ENCODE measurements at regions of chr11 and their contacts with region 1.

Region 1: DNA sequence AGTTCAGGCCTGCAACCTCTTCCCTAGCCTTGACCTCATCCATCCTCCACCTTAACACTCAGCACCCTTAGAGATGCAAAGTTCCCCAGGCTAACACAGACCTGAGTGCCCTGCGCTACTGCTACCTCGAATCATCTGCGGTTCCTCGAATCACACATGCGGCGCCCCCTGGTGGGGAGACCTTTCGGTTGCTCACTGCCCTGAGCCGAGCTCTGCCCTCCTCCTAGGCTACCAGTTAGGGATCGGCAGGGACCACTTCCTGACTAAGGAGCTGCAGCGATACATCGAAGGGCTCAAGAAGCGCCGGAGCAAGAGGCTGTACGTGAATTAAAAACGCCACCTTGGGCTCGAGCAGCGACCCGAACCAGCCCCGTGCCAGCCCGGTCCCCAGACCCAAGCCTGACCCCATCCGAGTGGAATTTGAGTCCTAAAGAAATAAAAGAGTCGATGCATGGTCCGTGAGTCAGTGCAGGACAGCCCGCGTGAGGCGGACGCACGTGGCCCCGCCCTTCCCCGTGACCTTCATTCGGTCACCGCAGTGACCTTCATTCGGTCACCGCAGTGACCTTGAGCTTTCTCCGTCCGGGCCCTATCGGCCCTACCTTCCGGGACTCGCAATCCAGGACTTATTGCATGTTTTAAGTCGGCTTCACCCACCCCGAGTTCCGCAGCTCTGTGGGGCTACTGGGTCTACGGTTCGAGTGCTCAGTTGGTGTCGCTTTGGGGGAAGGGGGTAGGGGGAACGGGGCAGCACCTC is 830 bp upstream of the ESRRA start:
- H3K4me3 Mint-ChIP-seq: peak overlapping the region; percentile 99
- H3K27ac Mint-ChIP-seq: peak overlapping the region; percentile 100
- H3K4me1 Mint-ChIP-seq: peaks cover 54% of the 10 kb centered on the region
- H3K27me3 Mint-ChIP-seq: peaks cover 26% of the 10 kb centered on the region

Region 2: GRCh38 chr11:64204464-64204989 is 100.0 kb before region 1 on chr11:
- intact Hi-C with region 1: loop called (anchors 1 kb)
- H3K4me3 Mint-ChIP-seq: peak overlapping the region; percentile 8
- H3K27ac Mint-ChIP-seq: peak overlapping the region; percentile 91
- H3K4me1 Mint-ChIP-seq: peaks cover 75% of the 10 kb centered on the region
- H3K27me3 Mint-ChIP-seq: no peaks in the 10 kb centered on the region

Region 3: DNA sequence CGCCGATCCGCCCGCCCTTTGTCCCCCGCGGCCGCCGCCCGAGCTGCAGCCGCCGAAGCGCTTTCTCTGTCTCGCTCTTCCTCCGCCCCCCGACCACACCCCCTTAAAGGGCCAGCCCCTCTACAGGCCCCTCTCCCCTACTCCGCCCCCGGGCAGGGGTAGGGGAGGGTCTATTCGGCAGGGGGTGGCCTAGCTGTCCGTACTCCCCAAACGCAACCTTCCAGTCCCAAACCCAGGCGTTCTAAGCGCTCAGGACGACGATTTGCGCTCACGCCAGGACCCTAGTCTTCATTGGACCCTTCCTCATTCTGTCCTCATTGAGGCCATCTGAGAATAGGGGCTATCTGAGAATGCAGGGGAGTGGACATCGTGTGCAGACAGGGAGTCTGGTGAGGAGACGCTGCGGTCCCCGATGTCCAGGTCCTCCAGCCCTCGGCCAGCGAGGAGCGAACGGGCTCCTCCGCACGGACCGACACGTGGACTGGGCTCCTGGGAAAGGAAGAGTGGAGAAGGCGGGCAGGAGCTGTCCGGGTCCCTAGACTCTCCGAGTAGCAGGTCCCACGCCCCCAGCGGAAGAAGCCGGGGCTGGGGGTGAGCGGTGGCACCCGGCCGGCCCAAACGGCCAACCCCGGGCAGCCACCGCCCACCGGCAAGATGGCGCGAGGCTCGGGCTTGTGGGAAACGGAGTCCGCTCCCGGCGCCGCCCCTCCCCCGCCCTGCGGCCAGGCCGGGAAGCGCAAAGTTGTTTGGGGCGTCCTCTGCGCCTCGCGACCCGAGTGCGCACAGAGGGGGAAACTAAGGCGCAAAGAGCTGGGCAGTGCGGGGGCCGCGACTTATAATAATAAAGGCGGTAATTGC is 57.4 kb before region 1 on chr11 and contains the start of gene PPP1R14B:
- intact Hi-C with region 1: loop called (anchors 5 kb)
- H3K4me3 Mint-ChIP-seq: peak within 1 kb of the TSS; percentile 89
- H3K27ac Mint-ChIP-seq: peak within 1 kb of the TSS; percentile 92
- H3K4me1 Mint-ChIP-seq: peaks cover 77% of the 10 kb centered on the region
- H3K27me3 Mint-ChIP-seq: peaks cover 9% of the 10 kb centered on the region

Region 4: DNA sequence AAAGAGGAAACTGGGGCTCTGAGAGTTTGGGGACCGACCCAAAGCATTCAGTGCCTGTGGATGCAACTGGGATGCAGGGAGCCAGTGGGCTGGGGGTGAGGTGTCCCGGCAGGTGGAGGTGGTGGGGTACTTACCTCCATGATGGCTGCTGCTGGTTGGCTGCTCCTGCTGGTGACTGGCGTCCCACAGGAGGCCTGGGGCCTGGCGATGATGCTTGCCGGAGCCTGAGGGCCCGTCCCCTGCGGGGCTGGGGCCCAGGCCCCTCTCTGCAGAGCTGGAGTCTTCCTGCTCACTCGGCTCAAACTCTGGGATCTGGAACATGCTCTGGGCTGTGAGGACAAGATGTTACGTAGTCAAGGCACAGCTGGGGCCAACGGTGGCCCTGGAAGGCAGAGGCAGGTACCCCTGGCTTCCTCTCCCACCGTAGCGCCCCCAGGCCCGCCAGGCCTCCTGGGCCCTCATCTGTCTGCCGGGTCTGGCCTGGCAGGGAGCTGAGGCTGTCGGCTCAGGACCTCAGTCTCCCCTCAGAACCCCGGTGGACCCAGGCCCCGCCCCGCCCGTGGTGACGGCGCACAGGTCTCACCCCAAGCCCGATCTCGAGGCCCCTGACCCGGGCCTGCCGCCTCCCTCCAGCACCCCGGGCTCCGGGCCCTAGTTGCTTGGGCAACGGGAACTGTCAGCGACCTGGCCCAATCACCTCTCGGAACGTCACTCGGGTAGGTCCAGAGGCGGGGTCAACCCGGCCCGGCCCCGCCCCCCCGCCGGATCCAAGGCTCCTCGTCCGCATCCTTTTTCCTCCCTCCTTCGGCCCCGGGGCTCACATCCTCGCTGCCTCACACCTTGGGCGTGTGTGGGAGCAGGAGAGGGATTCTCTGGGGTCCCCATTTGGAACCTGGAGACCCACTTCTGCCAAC is 20.2 kb before region 1 on chr11 and contains the start of gene BAD:
- intact Hi-C with region 1: loop called (anchors 2 kb)
- H3K4me3 Mint-ChIP-seq: peak within 1 kb of the TSS; percentile 76
- H3K27ac Mint-ChIP-seq: peak within 1 kb of the TSS; percentile 90
- H3K4me1 Mint-ChIP-seq: peaks cover 47% of the 10 kb centered on the region
- H3K27me3 Mint-ChIP-seq: peaks cover 10% of the 10 kb centered on the region

Region 5: DNA sequence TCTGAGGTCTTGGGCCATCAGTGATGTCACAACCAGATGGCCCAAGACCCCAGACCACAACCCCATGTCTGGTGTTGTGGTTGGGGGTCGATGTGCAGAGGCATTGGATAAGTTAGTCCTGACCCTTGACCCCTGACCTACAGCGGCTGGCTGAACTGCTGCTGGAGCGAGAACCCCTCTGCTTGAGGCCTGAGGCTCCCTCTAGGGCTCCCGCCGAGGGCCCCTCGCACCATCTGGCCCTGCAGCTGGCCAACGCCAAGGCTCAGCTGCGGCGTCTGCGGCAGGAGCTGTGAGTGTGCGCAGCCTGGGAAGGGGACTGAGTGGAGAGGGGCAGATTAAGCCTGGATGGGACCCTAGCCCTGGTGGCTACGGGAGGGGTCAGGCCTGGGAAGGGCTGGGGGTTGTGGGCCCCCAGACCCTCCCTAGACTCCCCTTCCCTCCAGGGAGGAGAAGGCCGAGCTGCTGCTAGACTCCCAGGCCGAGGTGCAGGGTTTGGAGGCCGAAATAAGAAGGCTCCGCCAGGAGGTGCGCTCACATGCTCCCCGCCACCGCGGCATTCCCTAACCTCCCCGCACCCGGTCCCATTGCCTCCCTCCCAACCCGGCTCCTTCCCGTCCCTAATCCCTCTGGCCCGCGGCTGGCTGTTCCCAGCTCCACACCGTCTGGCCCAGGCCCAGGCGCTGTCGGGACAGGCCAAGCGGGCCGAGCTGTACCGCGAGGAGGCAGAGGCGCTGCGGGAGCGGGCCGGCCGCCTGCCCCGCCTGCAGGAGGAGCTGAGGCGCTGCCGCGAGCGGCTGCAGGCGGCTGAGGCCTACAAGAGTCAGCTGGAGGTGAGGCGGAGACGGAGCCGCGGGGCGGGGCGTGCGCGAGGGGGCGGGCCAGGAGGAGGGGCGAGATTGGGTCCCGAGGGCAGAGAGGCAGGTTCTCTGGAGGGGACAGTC is 37.6 kb after region 1 on chr11:
- intact Hi-C with region 1: loop called (anchors 5 kb)
- H3K4me3 Mint-ChIP-seq: peak overlapping the region; percentile 57
- H3K27ac Mint-ChIP-seq: peak overlapping the region; percentile 48
- H3K4me1 Mint-ChIP-seq: peaks cover 80% of the 10 kb centered on the region
- H3K27me3 Mint-ChIP-seq: no peaks in the 10 kb centered on the region

Region 6: DNA sequence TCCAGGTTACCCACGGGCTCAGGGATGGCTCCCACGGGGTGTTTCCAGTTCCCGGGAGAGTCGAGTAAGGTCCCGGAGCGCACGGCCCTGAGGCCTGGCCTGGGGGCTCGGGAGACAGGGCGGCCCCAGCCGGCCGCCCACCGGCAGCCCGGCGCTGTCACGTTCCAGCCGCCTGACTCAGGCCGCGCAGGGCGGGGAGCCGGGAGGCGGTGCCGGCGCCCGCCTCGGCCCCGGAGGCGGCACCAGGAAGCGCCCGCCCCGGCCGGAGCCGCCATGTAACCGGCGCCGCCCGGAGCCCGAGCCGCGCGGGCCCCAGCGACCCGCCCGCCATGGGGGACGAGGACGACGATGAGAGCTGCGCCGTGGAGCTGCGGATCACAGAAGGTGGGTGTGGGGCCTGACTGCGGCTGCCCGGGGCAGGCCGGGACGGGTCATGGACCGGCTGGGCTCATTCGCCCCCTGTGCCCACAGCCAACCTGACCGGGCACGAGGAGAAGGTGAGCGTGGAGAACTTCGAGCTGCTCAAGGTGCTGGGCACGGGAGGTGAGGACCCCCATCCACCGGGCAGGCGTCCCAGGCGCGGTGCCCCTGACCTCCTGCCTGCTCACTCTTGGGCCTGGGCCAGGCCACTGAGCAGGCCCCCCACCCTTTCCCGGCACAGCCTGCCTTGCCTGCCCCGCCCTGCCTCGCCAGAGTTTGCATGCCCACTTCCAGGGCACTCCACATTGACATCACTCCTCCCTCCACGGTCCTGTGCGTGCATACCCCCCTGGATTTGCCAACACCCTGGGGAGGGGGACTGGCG is 54.6 kb after region 1 on chr11 and contains the start of gene RPS6KA4:
- intact Hi-C with region 1: no loop called
- H3K4me3 Mint-ChIP-seq: peak within 1 kb of the TSS; percentile 93
- H3K27ac Mint-ChIP-seq: peak within 1 kb of the TSS; percentile 80
- H3K4me1 Mint-ChIP-seq: peaks cover 61% of the 10 kb centered on the region
- H3K27me3 Mint-ChIP-seq: no peaks in the 10 kb centered on the region

Measured in dendritic cell treated with granulocyte-macrophage colony-stimulating factor and Interleukin-4, amounts not matched to agents 40 ng/mL and 50 ng/mL, for 4 days (primary cell).